Dorsolateral prefrontal cortex (tissue), 120 donors: ENCODE measurements at regions of chr9 and their contacts with region 1.

Region 1: DNA sequence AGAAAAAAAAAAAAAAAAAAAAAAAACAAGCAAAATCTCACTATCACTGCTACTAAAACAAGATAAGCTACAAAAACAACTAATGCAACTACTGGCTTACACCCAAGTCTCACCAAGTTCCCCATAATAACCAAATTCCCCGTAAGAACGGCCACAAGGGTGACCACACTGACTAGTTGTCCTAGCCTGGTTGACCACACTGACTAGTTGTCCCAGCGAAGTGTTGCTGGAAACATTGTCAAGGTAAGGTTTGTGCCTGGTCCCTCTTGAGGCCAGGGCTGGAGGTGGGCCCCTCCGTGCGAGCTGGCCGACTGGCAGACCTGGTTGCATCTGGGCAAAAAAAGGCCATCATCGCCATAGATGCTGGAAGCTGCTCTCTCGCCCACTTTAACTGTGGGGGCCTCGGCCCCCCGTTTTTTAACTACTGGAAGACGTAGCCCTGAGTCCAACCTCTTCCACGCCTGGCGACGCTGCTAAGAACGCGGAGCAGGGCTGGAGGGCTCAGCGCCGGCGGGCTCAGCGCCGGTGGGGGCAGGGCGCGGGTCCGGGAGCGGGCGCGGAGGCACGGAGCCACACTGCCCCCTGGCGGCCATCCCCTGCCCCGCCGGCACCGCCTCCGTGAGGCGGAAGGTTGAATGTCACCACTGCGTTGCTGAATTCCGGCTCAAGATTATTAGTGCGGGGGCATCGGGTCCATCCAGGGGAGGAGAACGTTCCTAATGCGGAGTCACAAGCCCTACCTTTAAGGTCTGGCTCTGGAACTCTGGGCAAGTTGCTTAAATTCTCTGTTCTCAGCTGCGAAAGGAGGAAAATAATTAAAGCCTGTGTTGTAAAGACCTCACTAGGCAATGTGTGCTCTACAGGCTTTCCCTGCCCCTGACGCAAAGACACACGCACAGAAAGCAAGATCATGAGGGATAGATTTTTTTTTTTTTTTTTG is 84.0 kb downstream of the HSD17B3 start:
- DNase-seq: peak; percentile 49 to 84 (median 66)
- H3K4me3 ChIP-seq: peak overlapping the region; percentile 19 to 64 (median 48)
- H3K27ac ChIP-seq: peak overlapping the region in 57 of 59 donors; percentile 11 to 90 (median 77)
- H3K27me3 ChIP-seq: no peaks in the 10 kb centered on the region
- CTCF ChIP-seq: peak; percentile 75 to 100 (median 99)

Region 2: DNA sequence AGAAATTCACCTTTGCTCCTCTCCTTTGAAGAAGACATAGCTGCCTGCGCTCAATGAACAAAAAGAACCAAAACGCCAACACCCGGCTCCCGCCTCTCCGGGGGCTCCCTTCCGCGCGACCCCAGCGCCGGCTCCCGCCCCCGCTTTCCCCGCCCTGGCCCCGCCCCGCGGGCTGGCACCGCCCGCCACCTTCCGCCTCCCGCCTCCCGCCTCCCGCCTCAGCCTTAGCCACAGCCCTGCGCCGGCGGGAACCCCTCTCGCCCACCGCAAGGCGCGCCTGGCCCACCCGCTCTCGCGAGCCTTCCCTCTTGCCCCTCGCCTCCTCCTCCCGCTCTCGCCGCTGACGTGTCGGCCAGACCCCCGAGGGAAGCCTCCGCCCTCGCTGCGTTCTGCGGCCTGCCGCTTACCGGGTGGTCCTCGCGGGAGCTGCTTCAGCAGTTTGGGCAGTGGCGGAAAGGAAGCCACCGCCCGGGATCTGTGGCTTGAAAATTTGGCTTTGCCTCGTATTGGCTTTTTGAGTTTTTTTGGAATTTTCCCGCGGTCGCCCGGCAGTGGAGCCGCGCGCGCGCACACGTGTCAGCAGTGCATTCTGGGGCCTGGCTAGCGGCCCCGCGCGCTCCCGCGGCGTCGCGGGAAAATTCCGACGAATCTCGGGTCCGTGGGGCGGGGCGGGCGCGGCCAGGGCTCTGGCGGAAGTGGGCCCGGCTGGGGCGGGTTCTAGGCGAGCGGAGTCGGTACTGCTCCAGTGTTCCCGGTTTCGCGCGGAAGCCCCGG is 900.7 kb before region 1 on chr9 and contains the start of gene FANCC:
- intact Hi-C with region 1: loop called in 1 of 2 experiments (anchors 10 kb)
- DNase-seq: peak; percentile 83 to 95 (median 88)
- H3K4me3 ChIP-seq: peak within 1 kb of the TSS; percentile 68 to 100 (median 94)
- H3K27ac ChIP-seq: peak within 1 kb of the TSS; percentile 40 to 98 (median 92)
- H3K27me3 ChIP-seq: no peaks in the 10 kb centered on the region
- CTCF ChIP-seq: peak in 25 of 56 donors; percentile 6 to 47 (median 21)
- total RNA-seq, gene FANCC: 2.8 to 23.5 (median 7.3) TPM

Region 3: GRCh38 chr9:95726756-95727155 is 491.3 kb before region 1 on chr9:
- intact Hi-C with region 1: loop called in 1 of 2 experiments (anchors 2 kb)
- DNase-seq: no peak
- H3K4me3 ChIP-seq: no peak overlapping the region
- H3K27ac ChIP-seq: no peak overlapping the region
- H3K27me3 ChIP-seq: peaks cover 0 to 13% (median 0%) of the 10 kb centered on the region in 45 donors
- CTCF ChIP-seq: peak; percentile 42 to 82 (median 72)

Region 4: DNA sequence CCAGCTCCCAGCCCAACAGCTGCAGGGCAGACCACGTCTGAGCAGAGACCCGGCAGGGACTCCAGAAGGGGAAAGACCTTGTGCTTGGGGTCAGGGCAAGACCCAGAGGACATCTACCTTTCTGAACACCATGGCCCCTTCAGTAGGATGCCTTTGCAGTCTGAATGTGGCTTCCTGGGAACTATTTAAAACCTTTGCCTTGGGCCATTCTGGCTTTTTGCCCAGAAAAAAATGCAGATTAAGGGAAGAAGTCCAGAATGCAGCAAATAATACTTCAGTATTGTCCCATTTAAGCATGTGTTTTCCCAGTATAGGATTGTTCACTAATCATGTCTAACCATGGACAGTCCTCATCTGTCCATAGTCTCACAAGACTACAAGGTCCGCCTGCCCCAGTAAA is 410.0 kb before region 1 on chr9:
- intact Hi-C with region 1: no loop called
- DNase-seq: no peak
- H3K4me3 ChIP-seq: no peak overlapping the region
- H3K27ac ChIP-seq: peak overlapping the region in 26 of 59 donors; percentile 1 to 66 (median 36)
- H3K27me3 ChIP-seq: no peaks in the 10 kb centered on the region
- CTCF ChIP-seq: no peak

Region 5: GRCh38 chr9:96020792-96021550 is 197.1 kb before region 1 on chr9:
- intact Hi-C with region 1: loop called in 1 of 2 experiments (anchors 10 kb)
- DNase-seq: peak in 4 of 10 donors; percentile 38 to 60 (median 56)
- H3K4me3 ChIP-seq: peak overlapping the region; percentile 46 to 85 (median 69)
- H3K27ac ChIP-seq: peak overlapping the region in 58 of 59 donors; percentile 6 to 95 (median 88)
- H3K27me3 ChIP-seq: peaks cover 0 to 22% (median 0%) of the 10 kb centered on the region in 45 donors
- CTCF ChIP-seq: peak in 3 of 56 donors; percentile 9 to 14 (median 10)

Region 6: GRCh38 chr9:96116275-96117064 is 101.6 kb before region 1 on chr9:
- intact Hi-C with region 1: loop called (anchors 1 kb)
- DNase-seq: peak; percentile 41 to 96 (median 90)
- H3K4me3 ChIP-seq: peak overlapping the region in 50 of 59 donors; percentile 1 to 63 (median 32)
- H3K27ac ChIP-seq: peak overlapping the region; percentile 75 to 99 (median 94)
- H3K27me3 ChIP-seq: no peaks in the 10 kb centered on the region
- CTCF ChIP-seq: peak in 9 of 56 donors; percentile 8 to 37 (median 12)